Activated CD4-positive, alpha-beta T cell treated with anti-CD3 and anti-CD28 coated beads for 36 hours (primary cell): ENCODE measurements at regions of chr3 and their contacts with region 1.

Region 1: GRCh38 chr3:12810013-12810780 is 13.7 kb downstream of the CAND2 start:
- DNase-seq: peak; percentile 96
- ATAC-seq: peak; percentile 100
- H3K4me3 Mint-ChIP-seq: peak overlapping the region; percentile 50
- H3K27ac Mint-ChIP-seq: no peak overlapping the region
- H3K4me1 Mint-ChIP-seq: peaks cover 6% of the 10 kb centered on the region
- H3K27me3 Mint-ChIP-seq: no peaks in the 10 kb centered on the region

Region 2: GRCh38 chr3:12706504-12707253 is 103.5 kb before region 1 on chr3:
- CTCF ChIA-PET with region 1: interaction called, 5 read pairs
- POLR2A ChIA-PET with region 1: no interaction called
- intact Hi-C with region 1: loop called in 1 of 2 experiments (anchors 1 kb)
- DNase-seq: peak; percentile 79
- ATAC-seq: peak; percentile 100
- H3K4me3 Mint-ChIP-seq: no peak overlapping the region
- H3K27ac Mint-ChIP-seq: no peak overlapping the region
- H3K4me1 Mint-ChIP-seq: no peaks in the 10 kb centered on the region
- H3K27me3 Mint-ChIP-seq: no peaks in the 10 kb centered on the region

Region 3: GRCh38 chr3:12796171-12797123 is 13.8 kb before region 1 on chr3 and contains the start of gene CAND2:
- CTCF ChIA-PET with region 1: interaction called, 49 read pairs
- POLR2A ChIA-PET with region 1: interaction called, 4 read pairs
- intact Hi-C with region 1: loop called in 1 of 2 experiments (anchors 1 kb)
- DNase-seq: peak; percentile 65
- ATAC-seq: peak; percentile 81
- H3K4me3 Mint-ChIP-seq: peak within 1 kb of the TSS; percentile 71
- H3K27ac Mint-ChIP-seq: peak within 1 kb of the TSS; percentile 70
- H3K4me1 Mint-ChIP-seq: peaks cover 16% of the 10 kb centered on the region
- H3K27me3 Mint-ChIP-seq: no peaks in the 10 kb centered on the region
- total RNA-seq, gene CAND2: 2.1 to 2.2 TPM

Region 4: GRCh38 chr3:12841149-12841970 is 31.2 kb after region 1 on chr3 and contains the start of gene RPL32:
- CTCF ChIA-PET with region 1: interaction called, 20 read pairs
- POLR2A ChIA-PET with region 1: interaction called, 9 read pairs
- intact Hi-C with region 1: loop called (anchors 1 kb)
- DNase-seq: peak; percentile 92
- ATAC-seq: peak; percentile 90
- H3K4me3 Mint-ChIP-seq: peak within 1 kb of the TSS; percentile 98
- H3K27ac Mint-ChIP-seq: peak within 1 kb of the TSS; percentile 99
- H3K4me1 Mint-ChIP-seq: peaks cover 43% of the 10 kb centered on the region
- H3K27me3 Mint-ChIP-seq: no peaks in the 10 kb centered on the region
- total RNA-seq, gene RPL32: 2,842 to 4,727 TPM